WTC11 (cell line): ENCODE measurements at regions of chr13 and their contacts with region 1.

Region 1: DNA sequence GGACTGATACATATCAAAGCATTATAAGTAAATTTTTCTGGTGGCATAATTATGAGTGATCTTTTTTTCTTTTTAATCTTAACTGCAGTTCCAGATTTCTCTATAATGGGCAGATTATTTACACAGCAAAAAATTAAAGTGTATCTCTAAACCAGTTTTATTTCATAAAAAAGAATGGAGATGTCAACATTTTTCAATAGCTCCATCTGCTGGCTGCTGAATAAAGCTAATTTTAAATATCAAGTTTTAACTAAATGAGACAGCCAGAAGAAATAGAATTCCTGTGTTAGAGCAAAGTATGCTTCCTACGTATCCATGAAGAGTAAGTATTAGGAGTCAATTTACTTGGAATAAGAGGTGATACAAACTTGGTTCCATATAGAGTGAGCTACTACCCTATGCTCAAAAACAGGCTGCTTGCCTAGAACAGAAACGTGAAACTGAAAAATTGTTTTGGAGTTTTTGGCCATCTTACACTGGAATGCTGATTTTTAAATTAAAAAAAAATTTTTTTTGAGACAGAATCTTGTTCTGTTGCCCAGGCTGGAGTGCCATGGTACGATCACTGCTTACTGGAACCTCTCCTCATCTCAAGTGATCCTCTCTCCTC is 5.0 kb upstream of the PDS5B start:
- DNase-seq: no peak
- ATAC-seq: no peak
- H3K4me3 Mint-ChIP-seq: no peak overlapping the region
- H3K27ac Mint-ChIP-seq: no peak overlapping the region
- H3K4me1 Mint-ChIP-seq: peaks cover 11% of the 10 kb centered on the region
- H3K27me3 Mint-ChIP-seq: peaks cover 15% of the 10 kb centered on the region
- CTCF ChIP-seq: no peak

Region 2: GRCh38 chr13:32472194-32472621 is 109.1 kb before region 1 on chr13:
- CTCF ChIA-PET with region 1: interaction called, 11 read pairs
- POLR2A ChIA-PET with region 1: no interaction called
- DNase-seq: no peak
- ATAC-seq: no peak
- H3K4me3 Mint-ChIP-seq: no peak overlapping the region
- H3K27ac Mint-ChIP-seq: no peak overlapping the region
- H3K4me1 Mint-ChIP-seq: no peaks in the 10 kb centered on the region
- H3K27me3 Mint-ChIP-seq: no peaks in the 10 kb centered on the region
- CTCF ChIP-seq: no peak

Region 3: GRCh38 chr13:32538621-32539246 is 42.5 kb before region 1 on chr13 and contains the start of gene N4BP2L2:
- CTCF ChIA-PET with region 1: interaction called, 11 read pairs
- POLR2A ChIA-PET with region 1: no interaction called
- DNase-seq: peak; percentile 91
- ATAC-seq: peak; percentile 99
- H3K4me3 Mint-ChIP-seq: peak within 1 kb of the TSS; percentile 99
- H3K27ac Mint-ChIP-seq: peak within 1 kb of the TSS; percentile 100
- H3K4me1 Mint-ChIP-seq: peaks cover 28% of the 10 kb centered on the region
- H3K27me3 Mint-ChIP-seq: no peaks in the 10 kb centered on the region
- CTCF ChIP-seq: no peak
- total RNA-seq, gene N4BP2L2: 68.9 to 78.3 TPM (median 72.9 TPM) in 3 replicates